Activated naive CD4-positive, alpha-beta T cell treated with anti-CD3 and anti-CD28 coated beads for 36 hours (primary cell): ENCODE measurements at regions of chr3 and their contacts with region 1.

Region 1: GRCh38 chr3:27060330-27060729 is 308.9 kb downstream of the NEK10 start:
- DNase-seq: no peak
- H3K4me3 Mint-ChIP-seq: no peak overlapping the region
- H3K27ac Mint-ChIP-seq: no peak overlapping the region
- H3K4me1 Mint-ChIP-seq: no peaks in the 10 kb centered on the region
- H3K27me3 Mint-ChIP-seq: peaks cover 6% of the 10 kb centered on the region

Region 2: GRCh38 chr3:27043328-27043956 is 16.9 kb before region 1 on chr3:
- CTCF ChIA-PET with region 1: no interaction called
- intact Hi-C with region 1: no loop called
- DNase-seq: no peak
- H3K4me3 Mint-ChIP-seq: no peak overlapping the region
- H3K27ac Mint-ChIP-seq: no peak overlapping the region
- H3K4me1 Mint-ChIP-seq: no peaks in the 10 kb centered on the region
- H3K27me3 Mint-ChIP-seq: no peaks in the 10 kb centered on the region

Region 3: GRCh38 chr3:27209617-27210264 is 149.4 kb after region 1 on chr3:
- CTCF ChIA-PET with region 1: no interaction called
- intact Hi-C with region 1: no loop called
- DNase-seq: no peak
- H3K4me3 Mint-ChIP-seq: no peak overlapping the region
- H3K27ac Mint-ChIP-seq: no peak overlapping the region
- H3K4me1 Mint-ChIP-seq: no peaks in the 10 kb centered on the region
- H3K27me3 Mint-ChIP-seq: no peaks in the 10 kb centered on the region

Region 4: DNA sequence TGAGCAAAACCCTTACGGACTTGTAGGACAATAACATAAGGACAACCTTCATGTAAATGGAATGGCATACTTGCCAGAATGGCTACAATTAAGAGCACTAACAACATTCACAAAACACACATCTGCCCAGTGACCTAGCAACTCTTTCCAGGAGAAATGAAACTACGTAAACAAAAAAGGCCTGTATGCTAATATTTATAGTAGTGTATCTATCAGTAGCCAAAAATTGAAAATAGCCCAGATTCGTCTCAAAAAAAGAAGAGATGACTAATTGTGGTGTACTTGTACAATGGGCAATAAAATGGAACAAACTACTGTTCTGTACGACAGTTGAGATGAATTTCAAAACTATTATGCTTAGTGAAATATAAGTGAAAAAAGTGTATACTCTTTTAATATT is 1219.4 kb after region 1 on chr3:
- CTCF ChIA-PET with region 1: no interaction called
- intact Hi-C with region 1: loop called (anchors 10 kb)
- DNase-seq: no peak
- H3K4me3 Mint-ChIP-seq: no peak overlapping the region
- H3K27ac Mint-ChIP-seq: no peak overlapping the region
- H3K4me1 Mint-ChIP-seq: peaks cover under 1% of the 10 kb centered on the region
- H3K27me3 Mint-ChIP-seq: no peaks in the 10 kb centered on the region